Activated CD4-positive, alpha-beta memory T cell treated with anti-CD3 and anti-CD28 coated beads, Interleukin-2, amount 10 ng/mL, durations not matched to agents 7 days and 5 days (primary cell): ENCODE measurements at regions of chr20 and their contacts with region 1.

Region 1: DNA sequence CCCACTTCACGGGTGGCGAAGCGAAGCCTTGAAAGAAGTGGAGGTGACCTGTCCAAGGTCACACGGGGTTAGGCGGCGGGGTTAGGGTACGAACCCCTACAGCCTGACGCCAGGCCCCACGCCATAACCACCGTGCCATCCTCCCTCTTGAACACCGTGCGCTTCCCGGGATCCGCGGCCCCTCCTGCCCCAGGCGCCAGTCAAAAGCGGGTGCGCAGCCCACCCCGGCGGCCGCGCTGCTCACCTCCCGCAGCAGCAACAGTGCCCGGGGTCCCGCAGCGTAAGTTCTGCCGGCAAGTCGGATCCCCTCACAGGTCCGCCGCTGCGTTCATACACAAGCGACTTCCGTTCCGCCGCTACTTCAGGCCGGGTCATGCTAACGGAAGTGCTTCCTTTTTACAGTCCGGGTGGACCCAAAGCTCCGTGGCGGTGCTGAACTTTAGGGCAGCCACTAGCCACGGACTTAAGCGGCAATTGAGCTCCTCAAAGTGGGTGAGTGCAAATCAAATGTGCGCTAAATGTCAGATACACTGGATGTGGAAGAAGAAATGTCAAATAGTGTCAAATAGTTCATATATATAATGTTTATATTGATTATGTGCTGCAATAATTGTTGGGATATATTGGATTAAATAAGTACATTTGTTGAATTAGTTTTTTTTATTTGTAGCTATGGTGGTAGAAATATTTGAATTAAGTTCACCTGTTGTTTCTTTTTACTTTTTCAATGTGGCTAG is at the start of gene CDK5RAP1:
- DNase-seq: peak; percentile 89
- H3K4me3 Mint-ChIP-seq: peak within 1 kb of the TSS; percentile 92
- H3K27ac Mint-ChIP-seq: peak within 1 kb of the TSS; percentile 81
- H3K4me1 Mint-ChIP-seq: peaks cover 39% of the 10 kb centered on the region
- H3K27me3 Mint-ChIP-seq: no peaks in the 10 kb centered on the region
- total RNA-seq, gene CDK5RAP1: 30.2 to 33.3 TPM

Region 2: GRCh38 chr20:33373735-33374605 is 27.4 kb before region 1 on chr20:
- CTCF ChIA-PET with region 1: interaction called, 5 read pairs
- POLR2A ChIA-PET with region 1: interaction called, 12 read pairs
- DNase-seq: no peak
- H3K4me3 Mint-ChIP-seq: no peak overlapping the region
- H3K27ac Mint-ChIP-seq: no peak overlapping the region
- H3K4me1 Mint-ChIP-seq: peaks cover 70% of the 10 kb centered on the region
- H3K27me3 Mint-ChIP-seq: no peaks in the 10 kb centered on the region

Region 3: GRCh38 chr20:33443512-33444239 is 42.3 kb after region 1 on chr20 and contains the start of gene SNTA1:
- CTCF ChIA-PET with region 1: interaction called, 24 read pairs
- POLR2A ChIA-PET with region 1: interaction called, 7 read pairs
- DNase-seq: peak; percentile 92
- H3K4me3 Mint-ChIP-seq: peak within 1 kb of the TSS; percentile 87
- H3K27ac Mint-ChIP-seq: peak within 1 kb of the TSS; percentile 89
- H3K4me1 Mint-ChIP-seq: peaks cover 23% of the 10 kb centered on the region
- H3K27me3 Mint-ChIP-seq: peaks cover 12% of the 10 kb centered on the region
- total RNA-seq, gene SNTA1: 5.6 to 6.9 TPM